ENCODE measurements at regions of chr4 and their contacts with region 1.

Region 1: DNA sequence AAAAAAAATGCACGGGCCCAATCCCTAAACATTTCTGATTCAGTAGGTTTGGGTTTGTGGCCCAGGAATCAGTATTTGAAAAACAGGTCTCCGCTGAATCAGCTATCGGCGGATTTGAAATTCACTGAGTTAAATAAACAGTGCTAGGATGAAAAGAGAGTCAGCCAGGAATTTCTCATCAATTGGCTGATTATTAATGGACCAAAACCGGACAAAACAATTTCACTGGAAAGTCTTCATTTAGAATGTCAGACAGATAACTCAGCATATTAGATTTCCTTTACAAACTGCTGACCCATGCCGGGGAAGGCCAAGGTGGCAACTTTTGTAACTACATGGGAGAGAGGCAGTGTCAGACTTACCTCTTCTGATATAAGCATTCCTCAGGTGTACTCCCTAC is 99.4 kb upstream of the LSM6 start:
- DNase-seq: no peak
- ATAC-seq: no peak
- H3K4me3 ChIP-seq: no peak overlapping the region
- H3K27ac ChIP-seq: no peak overlapping the region
- H3K4me1 ChIP-seq: no peaks in the 10 kb centered on the region
- H3K27me3 ChIP-seq: no peaks in the 10 kb centered on the region
- CTCF ChIP-seq: no peak
- POLR2A ChIP-seq: no peak
- RAD21 ChIP-seq: no peak

Region 2: DNA sequence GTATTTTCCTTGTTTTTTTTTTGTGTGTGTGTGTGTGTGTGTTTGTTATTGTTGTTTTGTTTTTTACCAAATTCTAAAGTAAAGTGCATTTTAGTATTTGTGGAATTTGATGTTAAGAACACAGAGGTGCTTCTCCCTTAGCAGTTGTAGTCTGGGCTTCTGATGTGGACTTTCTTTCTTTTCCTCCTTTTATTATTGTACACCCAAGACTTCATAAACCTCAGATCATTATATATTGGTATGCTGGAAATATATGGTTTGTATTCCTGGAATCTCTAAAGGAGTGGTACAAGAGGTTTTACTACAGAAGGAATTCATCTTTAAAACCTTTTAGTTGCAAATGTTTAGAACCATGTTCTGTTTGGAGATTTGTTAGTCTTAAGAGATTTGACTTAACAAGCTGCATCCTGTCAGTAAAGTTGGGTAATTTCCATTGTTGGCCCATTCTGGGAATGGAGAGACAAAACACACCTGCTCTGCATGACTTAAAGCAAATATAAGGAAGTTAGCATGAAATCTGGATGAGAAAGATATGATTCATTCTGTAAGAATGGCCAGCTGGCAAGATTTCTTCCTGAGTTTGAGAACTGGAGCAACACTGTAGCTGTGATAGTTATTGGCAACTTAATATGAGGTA is 530.4 kb before region 1 on chr4:
- CTCF ChIA-PET with region 1: no interaction called
- POLR2A ChIA-PET with region 1: no interaction called
- RAD21 ChIA-PET with region 1: no interaction called
- intact Hi-C with region 1: no loop called
- DNase-seq: peak; percentile 41
- ATAC-seq: peak; percentile 63
- H3K4me3 ChIP-seq: no peak overlapping the region
- H3K27ac ChIP-seq: no peak overlapping the region; the same call in 1 of the 2 replicates
- H3K4me1 ChIP-seq: peaks cover 17 to 19% of the 10 kb centered on the region in 2 experiments
- H3K27me3 ChIP-seq: no peaks in the 10 kb centered on the region
- CTCF ChIP-seq: no peak
- POLR2A ChIP-seq: no peak
- RAD21 ChIP-seq: peak; percentile 28

Region 3: GRCh38 chr4:146095091-146095690 is 19.1 kb after region 1 on chr4:
- CTCF ChIA-PET with region 1: interaction called, 12 read pairs
- POLR2A ChIA-PET with region 1: no interaction called
- RAD21 ChIA-PET with region 1: no interaction called
- intact Hi-C with region 1: no loop called
- DNase-seq: peak; percentile 57
- ATAC-seq: peak; percentile 66; the same call in 1 of the 2 replicates
- H3K4me3 ChIP-seq: no peak overlapping the region
- H3K27ac ChIP-seq: no peak overlapping the region
- H3K4me1 ChIP-seq: no peaks in the 10 kb centered on the region
- H3K27me3 ChIP-seq: no peaks in the 10 kb centered on the region
- CTCF ChIP-seq: peak; percentile 51 to 92 (median 79); a peak in 5 of 6 replicates
- POLR2A ChIP-seq: no peak
- RAD21 ChIP-seq: peak; percentile 61

Region 4: DNA sequence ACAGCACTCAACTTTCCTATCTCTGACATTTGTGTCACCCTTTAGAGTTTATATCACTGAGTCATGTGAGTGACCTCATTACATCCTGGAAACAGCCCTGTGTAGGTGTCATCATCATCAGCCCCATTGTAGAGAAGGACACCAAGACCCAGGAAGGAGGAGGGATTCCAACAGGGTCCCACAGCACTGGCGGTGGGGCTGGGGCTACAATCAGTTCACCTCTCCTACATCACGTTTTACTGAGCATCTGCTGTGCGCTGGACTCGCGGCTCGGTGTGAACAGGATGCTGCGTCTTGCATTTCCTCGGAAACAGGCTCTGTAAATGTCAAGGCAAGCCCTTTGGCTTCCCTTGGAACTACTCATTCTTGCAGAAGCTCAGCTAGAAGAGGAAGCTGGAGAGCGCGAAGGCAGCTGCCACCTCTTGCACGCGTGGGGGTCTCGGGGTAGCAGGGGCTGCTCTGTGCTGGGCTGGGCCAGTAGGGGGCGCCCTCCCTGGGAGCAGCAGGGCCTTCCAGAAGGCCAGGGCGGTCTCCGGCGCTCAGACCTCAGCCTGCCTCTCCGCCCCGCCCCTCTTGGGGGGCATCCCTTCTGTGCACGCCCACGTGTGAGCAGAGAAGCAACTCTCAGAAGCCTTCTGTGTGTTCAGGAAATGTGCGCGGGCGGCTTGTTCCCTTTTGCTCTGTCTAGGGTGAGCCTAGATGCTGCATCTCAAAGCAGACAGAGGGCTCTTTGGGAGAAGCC is 167.2 kb after region 1 on chr4:
- CTCF ChIA-PET with region 1: no interaction called
- POLR2A ChIA-PET with region 1: no interaction called
- RAD21 ChIA-PET with region 1: no interaction called
- intact Hi-C with region 1: no loop called
- DNase-seq: no peak
- ATAC-seq: no peak
- H3K4me3 ChIP-seq: no peak overlapping the region
- H3K27ac ChIP-seq: no peak overlapping the region
- H3K4me1 ChIP-seq: peaks cover 12 to 31% of the 10 kb centered on the region in 2 experiments
- H3K27me3 ChIP-seq: no peaks in the 10 kb centered on the region
- CTCF ChIP-seq: peak in 2 of 3 experiments; percentile 81 to 85; a peak in 4 of 6 replicates
- POLR2A ChIP-seq: no peak
- RAD21 ChIP-seq: no peak